T-cell (primary cell): ENCODE measurements at regions of chr17 and their contacts with region 1.

Region 1: GRCh38 chr17:31437720-31438420 is 46.4 kb downstream of the RAB11FIP4 start:
- DNase-seq: no peak
- ATAC-seq: no peak
- H3K4me3 ChIP-seq: no peak overlapping the region
- H3K4me3 Mint-ChIP-seq: no peak overlapping the region
- H3K27ac ChIP-seq: no peak overlapping the region
- H3K27ac Mint-ChIP-seq: no peak overlapping the region
- H3K4me1 ChIP-seq: peaks cover 6 to 20% of the 10 kb centered on the region in 2 experiments
- H3K4me1 Mint-ChIP-seq: peaks cover 12 to 21% (median 17%) of the 10 kb centered on the region in 3 donors
- H3K27me3 ChIP-seq: peaks cover 0 to 23% of the 10 kb centered on the region in 2 experiments
- H3K27me3 Mint-ChIP-seq: no peaks in the 10 kb centered on the region

Region 2: GRCh38 chr17:29699283-29699682 is 1738.6 kb before region 1 on chr17:
- CTCF ChIA-PET with region 1: no interaction called
- POLR2A ChIA-PET with region 1: no interaction called
- DNase-seq: no peak
- ATAC-seq: no peak
- H3K4me3 ChIP-seq: no peak overlapping the region
- H3K4me3 Mint-ChIP-seq: no peak overlapping the region
- H3K27ac ChIP-seq: no peak overlapping the region
- H3K27ac Mint-ChIP-seq: peak overlapping the region; percentile 66 to 67
- H3K4me1 ChIP-seq: peaks cover 5 to 10% of the 10 kb centered on the region in 2 experiments
- H3K4me1 Mint-ChIP-seq: peaks cover 33 to 38% (median 37%) of the 10 kb centered on the region in 3 donors
- H3K27me3 ChIP-seq: no peaks in the 10 kb centered on the region
- H3K27me3 Mint-ChIP-seq: no peaks in the 10 kb centered on the region

Region 3: DNA sequence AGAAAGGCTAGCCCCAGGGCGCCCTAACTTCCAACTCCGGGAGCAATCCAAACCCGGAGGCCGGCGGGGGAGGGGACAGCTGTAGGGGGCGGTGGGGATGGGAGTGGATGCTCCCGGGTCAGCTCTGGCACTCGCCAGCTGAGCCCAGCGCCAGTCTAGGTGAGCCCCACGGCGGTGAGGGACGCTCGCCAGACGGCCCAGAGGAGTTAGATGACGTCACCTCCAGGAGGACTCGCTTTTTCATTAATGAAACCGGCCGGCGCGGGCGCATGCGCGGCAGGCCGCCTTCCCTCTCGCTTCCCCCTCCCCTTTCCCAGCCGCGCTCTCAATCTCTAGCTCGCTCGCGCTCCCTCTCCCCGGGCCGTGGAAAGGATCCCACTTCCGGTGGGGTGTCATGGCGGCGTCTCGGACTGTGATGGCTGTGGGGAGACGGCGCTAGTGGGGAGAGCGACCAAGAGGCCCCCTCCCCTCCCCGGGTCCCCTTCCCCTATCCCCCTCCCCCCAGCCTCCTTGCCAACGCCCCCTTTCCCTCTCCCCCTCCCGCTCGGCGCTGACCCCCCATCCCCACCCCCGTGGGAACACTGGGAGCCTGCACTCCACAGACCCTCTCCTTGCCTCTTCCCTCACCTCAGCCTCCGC is 343.2 kb before region 1 on chr17 and contains the start of gene NF1:
- CTCF ChIA-PET with region 1: no interaction called
- POLR2A ChIA-PET with region 1: no interaction called
- DNase-seq: peak; percentile 67 to 92 (median 77)
- ATAC-seq: peak; percentile 72 to 77 (median 74)
- H3K4me3 ChIP-seq: peak within 1 kb of the TSS; percentile 70 to 76
- H3K4me3 Mint-ChIP-seq: peak within 1 kb of the TSS; percentile 92 to 93 (median 92)
- H3K27ac ChIP-seq: peak within 1 kb of the TSS; percentile 76
- H3K27ac Mint-ChIP-seq: peak within 1 kb of the TSS; percentile 95 to 97
- H3K4me1 ChIP-seq: peaks cover 2 to 19% of the 10 kb centered on the region in 2 experiments
- H3K4me1 Mint-ChIP-seq: peaks cover 11 to 14% (median 12%) of the 10 kb centered on the region in 3 donors
- H3K27me3 ChIP-seq: no peaks in the 10 kb centered on the region
- H3K27me3 Mint-ChIP-seq: no peaks in the 10 kb centered on the region
- total RNA-seq, gene NF1: 30.8 to 32.6 (median 31.8) TPM

Region 4: GRCh38 chr17:31357831-31358394 is 80.0 kb before region 1 on chr17:
- CTCF ChIA-PET with region 1: no interaction called
- POLR2A ChIA-PET with region 1: no interaction called
- DNase-seq: no peak
- ATAC-seq: no peak
- H3K4me3 ChIP-seq: no peak overlapping the region
- H3K4me3 Mint-ChIP-seq: no peak overlapping the region
- H3K27ac ChIP-seq: no peak overlapping the region
- H3K27ac Mint-ChIP-seq: no peak overlapping the region
- H3K4me1 ChIP-seq: no peaks in the 10 kb centered on the region
- H3K4me1 Mint-ChIP-seq: no peaks in the 10 kb centered on the region
- H3K27me3 ChIP-seq: no peaks in the 10 kb centered on the region
- H3K27me3 Mint-ChIP-seq: no peaks in the 10 kb centered on the region

Region 5: DNA sequence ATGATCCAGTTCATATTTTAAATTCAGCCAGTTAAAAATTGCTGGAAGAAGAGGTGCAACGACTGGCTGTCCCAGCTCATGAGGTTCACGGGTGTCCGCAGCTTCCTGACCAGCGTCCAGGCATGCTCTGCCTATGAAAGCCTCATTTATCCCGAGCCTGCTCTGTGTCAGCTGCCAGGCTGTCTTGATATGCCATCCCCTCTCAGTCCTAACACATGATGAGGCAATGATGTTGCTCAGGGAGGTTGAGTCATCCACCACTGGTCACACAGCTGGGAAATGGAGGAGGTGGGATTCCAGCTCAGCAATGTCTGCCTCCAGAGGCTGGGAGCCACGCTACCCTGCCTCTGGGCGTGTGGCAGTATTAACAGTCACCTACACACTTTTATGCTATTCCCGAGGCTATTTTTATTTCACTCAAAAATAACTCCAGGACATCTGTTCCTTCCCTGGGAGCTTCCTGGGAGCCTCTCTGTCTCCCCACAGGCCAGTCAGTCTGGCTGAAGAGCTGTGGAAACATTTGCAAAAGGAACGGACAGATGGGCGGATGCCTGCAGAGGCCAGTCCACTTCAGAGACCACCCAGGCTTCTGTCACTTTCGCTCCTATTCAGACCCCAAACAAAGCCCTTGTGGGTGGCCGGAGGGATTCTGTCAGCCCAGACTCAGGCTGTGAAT is 23.9 kb before region 1 on chr17:
- CTCF ChIA-PET with region 1: no interaction called
- POLR2A ChIA-PET with region 1: no interaction called
- DNase-seq: no peak
- ATAC-seq: no peak
- H3K4me3 ChIP-seq: no peak overlapping the region
- H3K4me3 Mint-ChIP-seq: no peak overlapping the region
- H3K27ac ChIP-seq: no peak overlapping the region
- H3K27ac Mint-ChIP-seq: no peak overlapping the region
- H3K4me1 ChIP-seq: no peaks in the 10 kb centered on the region
- H3K4me1 Mint-ChIP-seq: no peaks in the 10 kb centered on the region
- H3K27me3 ChIP-seq: peaks cover 0 to 19% of the 10 kb centered on the region in 2 experiments
- H3K27me3 Mint-ChIP-seq: no peaks in the 10 kb centered on the region

Region 6: DNA sequence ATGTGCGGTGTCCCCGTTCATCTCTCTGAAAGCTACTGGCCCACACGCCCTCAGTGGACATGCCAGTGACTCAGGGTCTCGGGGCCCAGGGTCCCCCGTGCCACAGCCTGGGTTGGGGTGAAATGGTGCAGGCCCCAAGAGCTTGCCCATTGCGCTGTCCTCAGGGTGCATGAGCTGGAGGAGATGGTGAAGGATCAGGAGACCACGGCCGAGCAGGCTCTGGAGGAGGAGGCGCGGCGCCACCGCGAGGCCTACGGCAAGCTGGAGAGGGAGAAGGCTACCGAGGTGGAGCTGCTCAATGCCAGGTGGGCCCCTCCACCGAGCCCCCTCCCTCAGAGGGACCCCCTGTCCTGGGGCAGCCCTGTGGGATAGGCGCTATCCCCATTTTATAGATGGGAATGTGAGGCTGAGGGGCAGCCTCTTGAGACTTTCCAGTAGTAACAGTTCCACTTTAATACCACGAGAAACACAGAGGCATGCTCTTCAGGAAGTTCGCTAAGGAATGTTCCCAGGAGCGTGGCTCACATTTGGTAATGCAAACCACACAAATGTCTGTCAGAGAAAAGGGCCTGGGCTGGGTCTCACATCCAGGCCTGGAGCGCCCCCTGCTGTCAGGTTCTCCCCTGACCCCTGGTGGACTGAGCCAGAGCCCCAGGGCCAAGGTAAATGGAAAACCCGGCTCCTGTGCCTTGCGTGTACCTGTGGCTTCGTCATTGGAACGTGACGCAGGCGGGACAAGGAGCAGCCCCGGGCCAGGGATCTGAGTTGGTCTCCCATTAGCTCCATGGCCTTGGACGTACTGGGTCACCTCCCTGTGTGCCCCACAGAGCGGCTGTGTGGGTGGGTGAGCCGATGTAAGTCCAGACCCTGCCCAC is 87.3 kb after region 1 on chr17:
- CTCF ChIA-PET with region 1: interaction called, 4 to 13 read pairs
- POLR2A ChIA-PET with region 1: interaction called in 1 of 2 experiments, 3 read pairs
- DNase-seq: peak; percentile 48 to 90 (median 82)
- ATAC-seq: peak; percentile 74 to 79 (median 77)
- H3K4me3 ChIP-seq: no peak overlapping the region
- H3K4me3 Mint-ChIP-seq: no peak overlapping the region
- H3K27ac ChIP-seq: no peak overlapping the region
- H3K27ac Mint-ChIP-seq: peak overlapping the region in 1 of 2 donors; percentile 28
- H3K4me1 ChIP-seq: no peaks in the 10 kb centered on the region
- H3K4me1 Mint-ChIP-seq: peaks cover 0 to 2% (median 1%) of the 10 kb centered on the region in 3 donors
- H3K27me3 ChIP-seq: no peaks in the 10 kb centered on the region
- H3K27me3 Mint-ChIP-seq: no peaks in the 10 kb centered on the region